ENCODE measurements at regions of chr11 and their contacts with region 1.

Region 1: GRCh38 chr11:6667733-6668374 is 12.2 kb upstream of the DCHS1 start:
- DNase-seq: peak in 6 of 9 experiments; percentile 16 to 81 (median 50)
- ATAC-seq: peak; percentile 76
- H3K4me3 ChIP-seq: no peak overlapping the region
- H3K4me3 Mint-ChIP-seq: peak overlapping the region; percentile 13
- H3K27ac ChIP-seq: peak overlapping the region in 1 of 2 experiments; percentile 47
- H3K27ac Mint-ChIP-seq: peak overlapping the region; percentile 81
- H3K4me1 ChIP-seq: peaks cover 59% of the 10 kb centered on the region
- H3K4me1 Mint-ChIP-seq: peaks cover 66% of the 10 kb centered on the region
- H3K27me3 ChIP-seq: no peaks in the 10 kb centered on the region
- H3K27me3 Mint-ChIP-seq: no peaks in the 10 kb centered on the region
- CTCF ChIP-seq: peak; percentile 57

Region 2: DNA sequence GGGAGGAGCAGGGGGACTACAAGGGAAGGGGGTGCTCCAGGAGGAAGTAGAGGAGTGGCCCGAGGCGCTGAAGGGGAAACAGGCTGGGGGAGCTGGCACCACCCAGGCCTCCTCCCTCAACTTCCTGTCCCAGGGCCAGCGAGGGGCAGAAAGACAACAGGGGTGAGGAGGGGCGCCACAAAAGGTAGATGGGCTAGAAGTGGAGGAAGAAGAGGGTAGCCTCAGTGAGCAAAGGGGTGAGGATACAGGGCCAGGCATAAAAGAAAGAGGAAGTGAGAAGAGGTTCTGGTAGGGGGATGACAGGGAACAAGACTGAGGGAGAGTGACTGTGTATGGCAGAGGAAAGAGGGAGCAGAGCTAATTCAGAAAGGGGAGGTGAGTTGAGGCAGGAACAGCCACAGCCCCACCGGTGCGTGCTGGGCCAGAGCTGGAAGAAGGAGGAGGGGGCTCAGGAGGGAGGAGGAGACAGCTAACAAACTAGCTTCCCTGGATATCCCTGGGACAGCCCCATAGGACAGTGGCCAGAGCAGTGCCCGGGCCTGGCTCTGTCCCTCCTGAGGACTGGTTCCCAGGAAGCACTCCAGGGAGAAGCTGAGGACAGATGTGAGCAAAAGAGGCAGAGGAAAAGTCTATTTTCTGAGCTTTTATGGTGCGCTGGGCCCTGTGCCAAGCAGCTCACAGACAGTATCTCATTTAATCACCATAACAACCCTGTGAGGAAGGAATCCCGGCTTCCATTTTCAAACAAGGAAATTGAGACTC is 20.8 kb before region 1 on chr11:
- CTCF ChIA-PET with region 1: interaction called, 10 read pairs
- POLR2A ChIA-PET with region 1: interaction called, 4 read pairs
- intact Hi-C with region 1: no loop called
- DNase-seq: peak in 8 of 9 experiments; percentile 17 to 76 (median 37)
- ATAC-seq: peak; percentile 61
- H3K4me3 ChIP-seq: peak overlapping the region; percentile 1 to 39
- H3K4me3 Mint-ChIP-seq: no peak overlapping the region
- H3K27ac ChIP-seq: peak overlapping the region; percentile 48 to 80
- H3K27ac Mint-ChIP-seq: no peak overlapping the region
- H3K4me1 ChIP-seq: peaks cover 79% of the 10 kb centered on the region
- H3K4me1 Mint-ChIP-seq: no peaks in the 10 kb centered on the region
- H3K27me3 ChIP-seq: no peaks in the 10 kb centered on the region
- H3K27me3 Mint-ChIP-seq: no peaks in the 10 kb centered on the region
- CTCF ChIP-seq: no peak

Region 3: DNA sequence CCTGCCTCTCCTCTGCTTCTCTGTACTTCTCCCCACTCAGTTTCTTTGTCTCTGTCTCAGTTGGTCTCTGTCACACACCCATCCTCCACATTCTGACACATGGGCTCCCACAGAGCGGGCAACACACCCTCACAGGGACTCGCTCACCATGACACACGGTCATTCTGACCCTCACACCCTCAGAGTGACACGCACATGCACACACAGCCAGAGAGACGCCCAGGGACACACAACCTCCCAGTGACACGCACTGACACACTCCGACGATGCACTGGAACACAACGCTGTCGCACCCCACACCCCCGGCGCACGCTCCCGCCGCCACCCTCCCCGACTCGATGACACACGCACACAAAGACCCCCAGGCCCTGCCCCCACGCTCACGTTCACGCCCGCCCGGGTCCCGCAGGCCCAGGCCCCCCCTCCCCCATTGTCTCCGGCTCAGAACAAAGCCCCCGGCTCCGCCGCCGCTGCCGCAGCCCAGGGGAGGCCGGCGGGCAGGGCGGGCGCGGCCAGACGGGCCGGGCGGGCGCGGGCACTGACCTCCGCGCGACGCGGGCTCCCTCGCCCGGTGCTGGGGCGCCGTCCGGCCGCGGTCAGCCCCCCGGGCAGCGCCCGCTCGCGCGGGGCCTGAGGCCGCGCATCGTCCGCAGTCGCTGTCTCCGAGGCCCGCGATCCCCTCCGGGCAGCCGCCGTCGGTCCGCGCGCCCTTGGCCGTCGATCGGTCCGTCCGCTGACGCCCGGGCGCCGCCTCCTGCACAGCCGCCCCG is 12.6 kb before region 1 on chr11:
- CTCF ChIA-PET with region 1: interaction called, 11 read pairs
- POLR2A ChIA-PET with region 1: interaction called, 7 read pairs
- intact Hi-C with region 1: no loop called
- DNase-seq: peak in 7 of 9 experiments; percentile 11 to 62 (median 52)
- ATAC-seq: peak; percentile 58
- H3K4me3 ChIP-seq: peak overlapping the region; percentile 42 to 43
- H3K4me3 Mint-ChIP-seq: no peak overlapping the region
- H3K27ac ChIP-seq: peak overlapping the region; percentile 6 to 44
- H3K27ac Mint-ChIP-seq: no peak overlapping the region
- H3K4me1 ChIP-seq: peaks cover 36% of the 10 kb centered on the region
- H3K4me1 Mint-ChIP-seq: peaks cover 12% of the 10 kb centered on the region
- H3K27me3 ChIP-seq: no peaks in the 10 kb centered on the region
- H3K27me3 Mint-ChIP-seq: no peaks in the 10 kb centered on the region
- CTCF ChIP-seq: no peak

Region 4: DNA sequence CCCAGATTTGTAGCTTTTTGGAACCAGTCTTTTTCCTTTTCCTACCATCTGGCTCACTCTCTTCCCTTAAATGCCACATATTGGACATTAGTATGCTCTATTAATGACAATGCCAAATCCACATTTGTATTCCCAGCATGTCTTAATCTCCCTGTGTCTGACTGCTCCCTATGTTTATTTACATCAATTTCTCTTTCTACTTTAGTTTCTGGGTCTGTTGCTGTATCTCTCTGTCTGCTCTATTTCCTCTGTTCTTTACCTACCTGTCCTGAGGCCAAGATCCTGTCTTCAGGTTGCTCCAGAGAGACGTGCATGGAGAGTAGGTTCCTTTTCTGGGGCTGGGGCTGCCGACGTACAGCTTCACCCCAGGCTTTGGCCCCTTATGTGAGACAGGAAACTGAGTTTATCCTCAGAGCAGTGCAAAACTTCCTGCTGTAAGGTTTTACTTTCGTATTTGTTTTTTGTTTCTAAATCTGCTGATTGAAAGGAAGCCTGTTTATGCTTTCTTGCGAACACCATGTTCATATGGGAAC is 78.3 kb after region 1 on chr11:
- CTCF ChIA-PET with region 1: no interaction called
- POLR2A ChIA-PET with region 1: no interaction called
- intact Hi-C with region 1: no loop called
- DNase-seq: peak in 8 of 9 experiments; percentile 26 to 82 (median 55)
- ATAC-seq: peak; percentile 84
- H3K4me3 ChIP-seq: peak overlapping the region; percentile 61 to 65
- H3K4me3 Mint-ChIP-seq: no peak overlapping the region
- H3K27ac ChIP-seq: peak overlapping the region; percentile 69 to 89
- H3K27ac Mint-ChIP-seq: no peak overlapping the region
- H3K4me1 ChIP-seq: peaks cover 57% of the 10 kb centered on the region
- H3K4me1 Mint-ChIP-seq: peaks cover 46% of the 10 kb centered on the region
- H3K27me3 ChIP-seq: no peaks in the 10 kb centered on the region
- H3K27me3 Mint-ChIP-seq: no peaks in the 10 kb centered on the region
- CTCF ChIP-seq: no peak

Measured in CD8-positive, alpha-beta T cell (primary cell).